Activated CD4-positive, alpha-beta memory T cell treated with anti-CD3 and anti-CD28 coated beads, Interleukin-2, amount 10 ng/mL, durations not matched to agents 7 days and 5 days (primary cell): ENCODE measurements at regions of chr21 and their contacts with region 1.

Region 1: DNA sequence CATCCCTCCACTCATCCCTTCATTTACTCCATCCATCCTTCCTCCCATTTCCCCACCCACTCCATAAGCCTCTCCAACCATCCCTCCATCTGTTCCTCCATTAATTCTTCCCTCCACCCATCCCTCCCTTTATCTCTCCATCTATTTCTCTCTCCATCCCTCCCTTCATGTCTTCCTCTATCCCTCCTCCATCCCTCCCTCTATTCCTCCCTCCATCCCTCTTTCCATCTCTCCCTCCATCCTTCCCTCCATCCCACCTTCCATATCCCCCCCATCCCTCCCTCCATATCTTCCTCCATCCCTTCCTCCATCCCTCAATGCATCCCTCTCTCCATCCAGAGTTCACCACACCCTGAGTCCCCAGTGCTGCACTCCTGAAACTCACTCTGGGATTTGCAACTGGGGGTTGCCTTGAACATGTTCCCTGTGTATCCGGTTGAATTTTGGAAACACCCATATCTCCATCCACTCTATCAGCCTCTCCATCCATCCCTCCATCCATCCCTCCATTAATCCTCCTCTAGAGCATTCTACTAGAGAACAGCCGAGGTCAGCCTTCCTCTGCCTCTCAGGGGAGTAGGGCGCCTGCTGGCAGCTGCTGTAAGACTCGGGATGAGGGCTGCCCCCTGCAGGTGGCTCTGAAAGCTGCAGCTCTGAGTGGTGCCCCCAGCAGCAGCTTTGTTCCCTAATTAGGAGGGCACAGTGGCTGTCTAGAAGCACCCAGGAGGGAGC is 39.4 kb downstream of the ABCG1 start:
- DNase-seq: peak; percentile 83
- H3K4me3 Mint-ChIP-seq: no peak overlapping the region
- H3K27ac Mint-ChIP-seq: no peak overlapping the region
- H3K4me1 Mint-ChIP-seq: peaks cover 10% of the 10 kb centered on the region
- H3K27me3 Mint-ChIP-seq: no peaks in the 10 kb centered on the region

Region 2: GRCh38 chr21:42145569-42146272 is 112.6 kb before region 1 on chr21:
- CTCF ChIA-PET with region 1: interaction called, 83 read pairs
- POLR2A ChIA-PET with region 1: interaction called, 16 read pairs
- DNase-seq: peak; percentile 69
- H3K4me3 Mint-ChIP-seq: no peak overlapping the region
- H3K27ac Mint-ChIP-seq: no peak overlapping the region
- H3K4me1 Mint-ChIP-seq: peaks cover 8% of the 10 kb centered on the region
- H3K27me3 Mint-ChIP-seq: peaks cover 3% of the 10 kb centered on the region

Region 3: GRCh38 chr21:42187976-42188653 is 70.2 kb before region 1 on chr21:
- CTCF ChIA-PET with region 1: interaction called, 16 read pairs
- POLR2A ChIA-PET with region 1: interaction called, 15 read pairs
- DNase-seq: peak; percentile 90
- H3K4me3 Mint-ChIP-seq: peak overlapping the region; percentile 28
- H3K27ac Mint-ChIP-seq: peak overlapping the region; percentile 95
- H3K4me1 Mint-ChIP-seq: peaks cover 71% of the 10 kb centered on the region
- H3K27me3 Mint-ChIP-seq: peaks cover 10% of the 10 kb centered on the region

Region 4: GRCh38 chr21:42220138-42220701 is 38.1 kb before region 1 on chr21:
- CTCF ChIA-PET with region 1: interaction called, 22 read pairs
- POLR2A ChIA-PET with region 1: interaction called, 11 read pairs
- DNase-seq: peak; percentile 79
- H3K4me3 Mint-ChIP-seq: peak overlapping the region; percentile 82
- H3K27ac Mint-ChIP-seq: peak overlapping the region; percentile 84
- H3K4me1 Mint-ChIP-seq: peaks cover 15% of the 10 kb centered on the region
- H3K27me3 Mint-ChIP-seq: peaks cover 4% of the 10 kb centered on the region

Region 5: GRCh38 chr21:42245331-42246193 is 12.8 kb before region 1 on chr21:
- CTCF ChIA-PET with region 1: interaction called, 18 read pairs
- POLR2A ChIA-PET with region 1: interaction called, 3 read pairs
- DNase-seq: no peak
- H3K4me3 Mint-ChIP-seq: no peak overlapping the region
- H3K27ac Mint-ChIP-seq: no peak overlapping the region
- H3K4me1 Mint-ChIP-seq: peaks cover 9% of the 10 kb centered on the region
- H3K27me3 Mint-ChIP-seq: peaks cover 2% of the 10 kb centered on the region